ENCODE measurements at regions of chr1 and their contacts with region 1.

Region 1: DNA sequence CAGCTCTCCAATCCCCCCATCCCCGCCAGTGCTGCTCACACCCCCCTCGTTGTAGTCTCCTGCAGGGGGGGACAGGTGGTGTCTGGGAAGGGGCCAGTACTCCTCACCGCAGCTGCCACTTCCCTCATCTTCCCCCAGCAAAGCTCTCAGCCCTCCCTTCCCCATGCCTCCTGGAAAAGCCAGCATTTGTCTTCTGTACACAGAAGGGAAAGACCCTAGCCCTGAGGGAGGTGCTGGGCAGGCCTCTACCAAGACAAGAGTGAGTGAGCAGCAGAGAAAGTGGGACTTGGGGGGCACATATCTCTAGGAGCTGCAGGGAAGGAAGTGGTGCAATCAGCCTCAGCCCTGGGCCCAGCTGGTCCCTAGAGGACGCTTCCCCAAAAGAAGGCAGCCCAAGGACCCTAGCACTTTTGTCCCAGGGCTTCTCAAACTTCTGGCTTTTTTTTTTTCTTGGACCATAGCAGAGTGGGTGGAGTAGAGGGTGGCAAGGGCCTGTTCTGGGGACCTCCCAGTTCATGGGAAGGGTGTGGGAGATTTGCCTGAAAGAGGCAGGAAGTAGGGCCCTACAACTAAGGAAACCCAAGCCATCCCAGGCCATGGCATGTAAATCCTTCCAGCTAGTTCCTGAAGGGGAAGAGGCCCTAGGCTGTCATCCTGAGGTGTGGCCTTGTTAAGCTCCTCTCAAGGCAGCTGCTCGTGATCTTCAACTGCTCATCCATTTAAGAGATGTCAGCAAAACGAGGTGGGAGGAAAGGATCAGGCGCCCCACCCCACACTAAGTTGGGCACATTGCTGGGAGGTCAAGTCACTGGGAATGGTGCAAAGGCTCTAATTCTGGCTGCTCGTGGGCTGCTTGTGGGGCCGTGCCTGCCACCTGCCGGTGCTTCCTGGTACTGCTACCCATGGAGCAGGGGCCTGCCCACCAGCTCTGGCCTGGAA is 12.6 kb downstream of the ZC3H12A start:
- DNase-seq: peak; percentile 77
- H3K4me3 Mint-ChIP-seq: no peak overlapping the region
- H3K27ac Mint-ChIP-seq: peak overlapping the region; percentile 50
- H3K4me1 Mint-ChIP-seq: peaks cover 15% of the 10 kb centered on the region
- H3K27me3 Mint-ChIP-seq: no peaks in the 10 kb centered on the region

Region 2: GRCh38 chr1:37317870-37318467 is 169.0 kb before region 1 on chr1:
- CTCF ChIA-PET with region 1: no interaction called
- POLR2A ChIA-PET with region 1: no interaction called
- DNase-seq: no peak
- H3K4me3 Mint-ChIP-seq: no peak overlapping the region
- H3K27ac Mint-ChIP-seq: no peak overlapping the region
- H3K4me1 Mint-ChIP-seq: no peaks in the 10 kb centered on the region
- H3K27me3 Mint-ChIP-seq: peaks cover 54% of the 10 kb centered on the region

Region 3: DNA sequence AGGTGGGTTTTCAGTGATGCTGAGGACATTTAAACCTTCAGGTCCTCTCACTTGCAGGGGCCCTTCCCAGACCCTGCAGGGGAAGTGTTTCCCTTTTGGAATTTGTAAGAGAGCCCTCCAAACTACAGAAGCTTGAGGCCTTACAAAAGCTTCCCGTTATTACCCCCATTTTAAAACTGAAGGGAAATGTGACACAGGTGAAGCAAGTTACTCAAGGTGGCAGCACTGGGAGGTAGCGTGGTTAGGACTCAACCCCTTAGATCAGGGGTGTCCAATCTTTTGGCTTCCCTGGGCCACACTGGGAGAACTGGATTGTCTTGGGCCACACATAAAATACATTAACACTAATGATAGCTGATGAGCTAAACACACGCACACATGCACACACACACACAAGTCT is 28.4 kb before region 1 on chr1:
- CTCF ChIA-PET with region 1: interaction called, 135 read pairs
- POLR2A ChIA-PET with region 1: interaction called, 14 read pairs
- DNase-seq: no peak
- H3K4me3 Mint-ChIP-seq: no peak overlapping the region
- H3K27ac Mint-ChIP-seq: no peak overlapping the region
- H3K4me1 Mint-ChIP-seq: peaks cover 8% of the 10 kb centered on the region
- H3K27me3 Mint-ChIP-seq: no peaks in the 10 kb centered on the region

Region 4: DNA sequence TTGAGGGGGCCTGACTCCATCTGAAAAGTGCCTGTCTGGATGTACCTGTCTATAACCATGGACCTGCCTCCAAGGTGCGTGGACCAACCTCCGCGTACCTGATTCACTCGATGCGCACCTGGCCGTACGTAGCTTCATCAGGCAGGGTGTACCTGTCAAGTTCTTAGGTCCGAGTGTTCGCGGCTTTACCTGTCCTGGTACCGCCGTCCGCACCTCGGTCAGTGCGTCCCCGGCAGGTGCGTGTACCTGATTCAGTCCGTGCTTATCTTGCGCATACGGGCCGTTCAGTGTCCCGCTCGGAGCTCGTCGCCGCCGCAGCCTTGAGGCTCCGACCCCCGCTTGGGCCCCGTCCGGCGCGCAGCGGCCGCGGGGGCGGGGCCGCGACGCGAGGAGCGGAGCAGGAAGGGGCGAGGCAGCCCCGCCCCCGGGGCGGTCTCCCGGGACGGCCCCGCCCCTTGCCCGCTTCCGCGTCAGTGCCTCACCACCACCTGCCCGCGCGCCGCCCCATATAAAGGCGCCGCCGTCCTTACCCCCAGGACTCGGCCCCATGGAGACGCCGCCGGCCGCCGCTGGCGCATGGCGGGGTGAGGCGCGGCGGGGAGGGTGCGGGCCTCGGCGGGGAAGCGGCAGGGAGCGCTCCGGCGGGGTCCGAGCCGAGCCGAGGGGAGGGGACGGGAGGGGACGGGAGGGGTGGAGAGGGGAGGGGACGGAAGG is 12.7 kb before region 1 on chr1 and contains the start of gene ZC3H12A:
- CTCF ChIA-PET with region 1: interaction called, 59 read pairs
- POLR2A ChIA-PET with region 1: interaction called, 99 read pairs
- DNase-seq: peak; percentile 93
- H3K4me3 Mint-ChIP-seq: peak within 1 kb of the TSS; percentile 98
- H3K27ac Mint-ChIP-seq: peak within 1 kb of the TSS; percentile 99
- H3K4me1 Mint-ChIP-seq: peaks cover 53% of the 10 kb centered on the region
- H3K27me3 Mint-ChIP-seq: no peaks in the 10 kb centered on the region
- total RNA-seq, gene ZC3H12A: 29.9 to 31.1 TPM

Region 5: GRCh38 chr1:37509181-37509580 is 22.2 kb after region 1 on chr1:
- CTCF ChIA-PET with region 1: interaction called, 30 read pairs
- POLR2A ChIA-PET with region 1: interaction called, 25 read pairs
- DNase-seq: no peak
- H3K4me3 Mint-ChIP-seq: no peak overlapping the region
- H3K27ac Mint-ChIP-seq: no peak overlapping the region
- H3K4me1 Mint-ChIP-seq: peaks cover 38% of the 10 kb centered on the region
- H3K27me3 Mint-ChIP-seq: no peaks in the 10 kb centered on the region

Region 6: DNA sequence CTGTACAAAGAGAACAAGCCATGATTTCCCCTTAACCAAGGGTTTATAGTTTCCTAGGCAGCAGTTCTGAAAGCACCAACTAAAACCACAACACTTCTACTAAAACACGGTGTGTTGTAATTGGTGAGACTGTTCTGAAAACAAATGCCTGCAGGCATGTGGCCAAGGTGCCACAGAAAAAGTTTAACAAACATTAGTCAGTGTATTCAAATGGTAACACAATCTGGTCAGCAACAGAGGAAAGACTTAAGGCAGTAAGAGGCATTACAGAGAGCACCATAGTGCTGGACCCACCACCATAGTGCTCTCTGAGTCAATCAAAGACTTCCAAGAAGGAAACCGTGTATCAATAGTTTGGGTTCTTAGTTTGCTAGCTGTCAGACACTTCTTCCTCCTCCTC is 50.4 kb after region 1 on chr1:
- CTCF ChIA-PET with region 1: no interaction called
- POLR2A ChIA-PET with region 1: no interaction called
- DNase-seq: no peak
- H3K4me3 Mint-ChIP-seq: no peak overlapping the region
- H3K27ac Mint-ChIP-seq: peak overlapping the region; percentile 4
- H3K4me1 Mint-ChIP-seq: peaks cover 18% of the 10 kb centered on the region
- H3K27me3 Mint-ChIP-seq: no peaks in the 10 kb centered on the region

Region 7: DNA sequence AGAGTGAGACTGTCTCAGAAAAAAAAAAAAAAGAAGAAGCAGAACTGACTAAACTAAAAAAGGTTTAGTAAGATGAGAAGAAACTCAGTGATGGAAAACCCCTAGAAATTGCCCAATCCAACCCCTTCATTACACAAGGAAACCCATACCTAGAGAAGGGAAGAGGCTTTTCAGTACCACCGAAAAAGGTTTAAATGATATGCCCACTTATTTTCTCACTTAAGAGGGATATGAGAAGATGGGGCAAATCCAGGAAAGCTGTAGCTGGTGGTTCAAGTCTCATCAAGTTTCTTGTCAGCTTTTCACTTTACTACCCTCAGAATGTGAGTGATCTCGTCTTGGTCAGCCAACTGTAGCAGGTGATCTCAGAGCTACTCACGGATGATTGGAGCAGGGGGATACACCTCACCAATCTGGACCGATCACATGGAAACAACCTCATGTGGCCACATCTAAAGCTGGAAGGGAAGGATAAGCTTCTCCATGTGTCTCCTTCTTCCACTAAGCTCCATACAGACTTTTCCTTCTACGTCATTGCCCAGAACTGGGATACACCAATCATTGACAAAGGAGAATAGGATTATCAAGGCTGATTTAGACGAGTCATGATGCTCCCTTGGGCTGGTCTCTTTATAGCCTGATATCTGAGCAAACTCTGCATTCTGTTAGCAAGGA is 686.3 kb after region 1 on chr1:
- CTCF ChIA-PET with region 1: no interaction called
- POLR2A ChIA-PET with region 1: no interaction called
- DNase-seq: no peak
- H3K4me3 Mint-ChIP-seq: no peak overlapping the region
- H3K27ac Mint-ChIP-seq: no peak overlapping the region
- H3K4me1 Mint-ChIP-seq: no peaks in the 10 kb centered on the region
- H3K27me3 Mint-ChIP-seq: peaks cover 1% of the 10 kb centered on the region